ENCODE measurements at regions of chr18 and their contacts with region 1.

Region 1: GRCh38 chr18:9095297-9096006 is 7.0 kb upstream of the NDUFV2 start:
- DNase-seq: peak; percentile 55 to 72 (median 61)
- H3K4me3 ChIP-seq: peak overlapping the region in 1 of 2 donors; percentile 5
- H3K4me3 Mint-ChIP-seq: peak overlapping the region; percentile 52 to 89 (median 74)
- H3K27ac ChIP-seq: peak overlapping the region; percentile 54
- H3K27ac Mint-ChIP-seq: peak overlapping the region; percentile 83 to 97 (median 94)
- H3K4me1 ChIP-seq: peaks cover 53% of the 10 kb centered on the region
- H3K4me1 Mint-ChIP-seq: peaks cover 37 to 68% (median 53%) of the 10 kb centered on the region in 4 donors
- H3K27me3 ChIP-seq: no peaks in the 10 kb centered on the region
- H3K27me3 Mint-ChIP-seq: no peaks in the 10 kb centered on the region

Region 2: GRCh38 chr18:8635087-8635486 is 460.4 kb before region 1 on chr18:
- CTCF ChIA-PET with region 1: no interaction called
- POLR2A ChIA-PET with region 1: no interaction called
- intact Hi-C with region 1: no loop called
- DNase-seq: no peak
- H3K4me3 ChIP-seq: no peak overlapping the region
- H3K4me3 Mint-ChIP-seq: no peak overlapping the region
- H3K27ac ChIP-seq: no peak overlapping the region
- H3K27ac Mint-ChIP-seq: peak overlapping the region in 1 of 7 donors; percentile 2
- H3K4me1 ChIP-seq: no peaks in the 10 kb centered on the region
- H3K4me1 Mint-ChIP-seq: peaks cover 0 to 3% (median 1%) of the 10 kb centered on the region in 4 donors
- H3K27me3 ChIP-seq: no peaks in the 10 kb centered on the region
- H3K27me3 Mint-ChIP-seq: no peaks in the 10 kb centered on the region

Region 3: GRCh38 chr18:9082711-9083510 is 12.5 kb before region 1 on chr18:
- CTCF ChIA-PET with region 1: interaction called, 13 read pairs
- POLR2A ChIA-PET with region 1: interaction called, 17 read pairs
- intact Hi-C with region 1: loop called (anchors 1 kb)
- DNase-seq: peak; percentile 53 to 81 (median 66)
- H3K4me3 ChIP-seq: peak overlapping the region in 1 of 2 donors; percentile 25
- H3K4me3 Mint-ChIP-seq: peak overlapping the region; percentile 43 to 84 (median 68)
- H3K27ac ChIP-seq: peak overlapping the region; percentile 58
- H3K27ac Mint-ChIP-seq: peak overlapping the region; percentile 92 to 97 (median 95)
- H3K4me1 ChIP-seq: peaks cover 54% of the 10 kb centered on the region
- H3K4me1 Mint-ChIP-seq: peaks cover 27 to 50% (median 40%) of the 10 kb centered on the region in 4 donors
- H3K27me3 ChIP-seq: no peaks in the 10 kb centered on the region
- H3K27me3 Mint-ChIP-seq: no peaks in the 10 kb centered on the region

Region 4: GRCh38 chr18:9109523-9109922 is 14.1 kb after region 1 on chr18:
- CTCF ChIA-PET with region 1: interaction called, 11 read pairs
- POLR2A ChIA-PET with region 1: interaction called, 285 read pairs
- intact Hi-C with region 1: no loop called
- DNase-seq: no peak
- H3K4me3 ChIP-seq: no peak overlapping the region
- H3K4me3 Mint-ChIP-seq: peak overlapping the region; percentile 27 to 85 (median 74)
- H3K27ac ChIP-seq: peak overlapping the region; percentile 82
- H3K27ac Mint-ChIP-seq: peak overlapping the region; percentile 61 to 95 (median 84)
- H3K4me1 ChIP-seq: peaks cover 100% of the 10 kb centered on the region
- H3K4me1 Mint-ChIP-seq: peaks cover 63 to 95% (median 79%) of the 10 kb centered on the region in 4 donors
- H3K27me3 ChIP-seq: no peaks in the 10 kb centered on the region
- H3K27me3 Mint-ChIP-seq: no peaks in the 10 kb centered on the region

Region 5: DNA sequence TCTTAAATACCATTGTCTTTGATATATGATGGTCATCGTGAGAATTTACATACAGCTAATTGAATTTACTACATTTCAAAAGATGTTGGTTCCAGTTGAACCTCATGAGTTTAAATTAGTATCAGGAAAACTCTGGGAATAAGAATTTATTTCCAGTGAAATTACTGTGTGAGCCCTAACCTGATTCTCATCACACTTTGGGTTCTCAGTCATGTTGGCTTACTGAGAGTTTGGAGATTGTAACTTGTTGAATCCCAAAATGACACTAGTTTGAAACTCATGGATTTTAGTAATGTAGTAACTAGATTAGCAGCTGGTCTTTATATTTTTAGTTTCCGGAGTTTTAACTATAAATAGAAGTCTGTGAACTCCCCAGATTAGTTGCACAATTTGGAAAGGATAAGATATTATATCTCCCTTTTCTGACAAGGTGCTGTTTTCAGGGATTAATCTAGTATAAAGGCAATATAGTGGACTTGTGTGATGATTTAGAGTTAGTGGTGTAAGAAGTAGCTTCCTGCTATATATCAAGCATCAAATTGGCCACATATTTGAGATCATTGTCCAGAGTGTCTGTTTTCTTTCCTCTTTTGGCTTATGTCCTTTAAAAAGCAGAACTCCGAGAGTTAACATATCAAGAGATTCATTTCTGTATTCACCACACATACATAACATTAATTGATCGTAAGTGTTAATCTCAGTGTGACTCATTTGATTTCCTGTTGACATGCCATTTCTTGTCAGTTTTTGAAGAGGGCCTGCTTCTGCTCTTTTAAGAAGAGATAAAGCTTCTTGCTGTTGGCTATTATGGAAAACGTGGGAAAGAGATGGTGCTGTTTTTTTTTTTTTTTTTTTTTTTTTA is 22.8 kb after region 1 on chr18:
- CTCF ChIA-PET with region 1: interaction called, 3 read pairs
- POLR2A ChIA-PET with region 1: interaction called, 285 read pairs
- intact Hi-C with region 1: no loop called
- DNase-seq: peak in 4 of 5 donors; percentile 47 to 54 (median 52)
- H3K4me3 ChIP-seq: peak overlapping the region; percentile 8 to 28
- H3K4me3 Mint-ChIP-seq: peak overlapping the region; percentile 62 to 91 (median 84)
- H3K27ac ChIP-seq: peak overlapping the region; percentile 80
- H3K27ac Mint-ChIP-seq: peak overlapping the region; percentile 96 to 100 (median 98)
- H3K4me1 ChIP-seq: peaks cover 98% of the 10 kb centered on the region
- H3K4me1 Mint-ChIP-seq: peaks cover 51 to 86% (median 69%) of the 10 kb centered on the region in 4 donors
- H3K27me3 ChIP-seq: no peaks in the 10 kb centered on the region
- H3K27me3 Mint-ChIP-seq: no peaks in the 10 kb centered on the region

Region 6: DNA sequence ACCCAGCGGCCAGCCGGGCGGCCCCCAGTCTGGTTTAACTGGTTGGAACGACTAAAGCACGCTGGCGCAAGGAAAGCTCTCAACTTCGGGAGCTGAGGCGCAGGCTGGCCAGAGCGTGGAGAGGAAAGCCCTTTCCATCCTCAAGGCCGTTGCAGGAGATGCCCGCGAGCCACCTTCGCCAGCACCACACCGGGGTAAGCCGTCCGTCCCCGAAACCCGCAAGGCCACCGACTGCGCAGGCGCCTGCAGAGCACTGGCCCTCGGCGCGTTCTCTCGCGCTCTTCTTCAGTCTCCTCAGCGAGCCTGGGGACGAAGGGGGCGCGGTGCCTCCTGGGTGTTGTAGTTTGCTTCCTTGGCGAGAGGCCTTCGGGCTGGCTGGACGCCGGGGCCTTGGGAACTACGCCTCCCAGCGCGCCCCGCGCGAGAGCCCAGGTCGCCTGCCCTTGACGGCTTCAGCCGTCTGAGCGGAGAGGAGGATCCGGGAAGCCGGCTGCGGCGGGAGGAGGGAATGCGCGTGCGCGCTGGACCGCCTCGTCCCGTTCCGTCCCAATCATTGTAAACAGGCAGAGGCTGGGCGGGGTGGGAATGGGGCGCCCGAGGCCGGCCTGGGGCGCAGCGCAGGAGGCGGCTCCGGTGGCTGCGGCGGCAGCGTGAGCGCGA is 379.7 kb after region 1 on chr18 and contains the start of gene RALBP1:
- CTCF ChIA-PET with region 1: no interaction called
- POLR2A ChIA-PET with region 1: no interaction called
- intact Hi-C with region 1: loop called (anchors 2 kb)
- DNase-seq: peak; percentile 96 to 98 (median 97)
- H3K4me3 ChIP-seq: peak within 1 kb of the TSS; percentile 86
- H3K4me3 Mint-ChIP-seq: peak within 1 kb of the TSS; percentile 94 to 99 (median 98)
- H3K27ac ChIP-seq: peak within 1 kb of the TSS; percentile 79
- H3K27ac Mint-ChIP-seq: peak within 1 kb of the TSS; percentile 95 to 98 (median 96)
- H3K4me1 ChIP-seq: peaks cover 24% of the 10 kb centered on the region
- H3K4me1 Mint-ChIP-seq: peaks cover 25 to 46% (median 33%) of the 10 kb centered on the region in 4 donors
- H3K27me3 ChIP-seq: no peaks in the 10 kb centered on the region
- H3K27me3 Mint-ChIP-seq: peaks cover 3 to 5% of the 10 kb centered on the region in 2 donors
- total RNA-seq, gene RALBP1: 44.9 to 49.9 TPM

Region 7: DNA sequence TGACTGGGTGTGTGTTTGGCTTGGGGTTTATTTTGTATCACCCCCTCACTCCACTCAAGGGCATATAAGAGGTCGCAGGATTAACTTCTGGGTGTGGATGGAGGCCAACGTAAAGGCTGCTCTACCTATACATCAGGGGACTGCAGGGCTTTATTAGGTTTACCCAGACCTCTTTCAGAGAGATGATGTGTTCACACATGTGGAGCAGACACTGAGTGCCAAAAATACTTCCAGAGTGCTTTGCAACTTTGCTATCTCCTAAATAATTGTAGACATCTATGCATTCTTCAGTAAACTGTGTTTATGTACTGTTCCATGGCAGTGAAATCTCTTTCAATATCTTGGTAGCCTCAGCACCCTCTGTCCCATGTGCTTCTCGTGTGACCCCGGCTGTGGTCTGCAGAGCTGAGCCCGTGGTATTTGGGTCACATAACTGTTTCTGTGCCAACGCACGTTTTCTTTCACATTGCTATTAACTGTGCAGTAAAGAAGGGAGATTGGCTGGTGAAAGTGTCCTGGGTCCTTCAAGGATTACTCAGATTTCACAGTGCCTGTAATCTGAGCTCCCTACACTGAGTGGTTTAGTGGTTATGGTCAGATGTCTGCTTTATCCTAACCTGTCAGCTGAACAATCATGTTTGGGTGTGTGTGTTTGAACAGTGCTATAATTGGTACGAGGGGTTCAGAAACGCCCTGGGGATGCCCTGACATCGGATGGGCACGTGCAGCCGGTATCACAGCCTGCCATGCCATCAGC is 1026.5 kb after region 1 on chr18:
- CTCF ChIA-PET with region 1: no interaction called
- POLR2A ChIA-PET with region 1: no interaction called
- intact Hi-C with region 1: no loop called
- DNase-seq: no peak
- H3K4me3 ChIP-seq: no peak overlapping the region
- H3K4me3 Mint-ChIP-seq: no peak overlapping the region
- H3K27ac ChIP-seq: no peak overlapping the region
- H3K27ac Mint-ChIP-seq: no peak overlapping the region
- H3K4me1 ChIP-seq: no peaks in the 10 kb centered on the region
- H3K4me1 Mint-ChIP-seq: peaks cover 0 to 16% (median 5%) of the 10 kb centered on the region in 4 donors
- H3K27me3 ChIP-seq: no peaks in the 10 kb centered on the region
- H3K27me3 Mint-ChIP-seq: no peaks in the 10 kb centered on the region

Measured in CD4-positive, alpha-beta memory T cell (primary cell).